ENCODE measurements at regions of chr2 and their contacts with region 1.

Region 1: DNA sequence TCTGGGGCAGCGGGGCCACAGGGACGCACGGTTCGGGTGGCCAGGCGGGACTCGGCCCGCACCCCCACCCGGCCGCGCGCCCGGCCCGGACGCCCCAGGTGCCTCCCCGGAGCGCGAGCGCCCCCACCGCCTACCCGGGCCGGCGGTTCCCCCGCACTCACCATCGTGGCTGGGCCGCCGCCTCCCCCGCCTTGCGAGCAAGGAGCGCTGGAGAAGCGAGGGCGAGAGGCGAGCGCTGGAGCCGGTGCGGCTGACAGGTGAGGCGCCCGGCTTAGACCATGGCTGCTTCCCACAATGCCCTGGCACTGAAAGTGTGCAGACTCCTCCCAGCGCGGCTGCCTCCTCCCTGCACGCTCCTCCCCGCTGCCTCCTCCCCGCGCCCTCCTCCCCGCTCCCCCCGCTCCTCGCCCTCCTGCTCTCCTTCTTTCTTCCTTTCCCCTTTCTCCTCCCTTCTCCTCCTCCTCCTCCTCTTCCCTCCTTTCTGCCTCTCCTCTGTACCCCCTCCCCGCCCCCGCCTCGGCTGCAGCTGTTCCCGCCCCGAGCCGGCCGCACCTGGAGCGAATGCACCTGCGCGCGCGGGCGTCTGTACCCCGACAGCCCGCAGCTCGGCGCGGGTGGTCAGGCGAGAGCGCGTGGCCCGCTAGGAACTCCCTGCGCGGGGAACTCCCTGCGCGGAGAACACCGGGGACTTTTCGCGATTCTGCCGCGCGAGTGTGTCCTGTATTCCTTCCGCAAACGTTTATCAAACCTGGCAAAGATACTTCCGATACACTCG is at the start of gene AP1S3:
- DNase-seq: peak; percentile 69
- ATAC-seq: peak; percentile 94
- H3K4me3 ChIP-seq: peak within 1 kb of the TSS; percentile 78 to 89 (median 79)
- H3K27ac ChIP-seq: no peak within 1 kb of the TSS
- H3K4me1 ChIP-seq: peaks cover 29% of the 10 kb centered on the region
- H3K27me3 ChIP-seq: no peaks in the 10 kb centered on the region; a peak in 1 of 5 replicates
- CTCF ChIP-seq: peak; percentile 71
- EP300 ChIP-seq: no peak
- POLR2A ChIP-seq: peak; percentile 57 to 64; a peak in 3 of 4 replicates
- RAD21 ChIP-seq: peak; percentile 76
- total RNA-seq, gene AP1S3: 16.3 and 26.3 TPM in 2 replicates

Region 2: GRCh38 chr2:223779877-223780276 is 57.6 kb before region 1 on chr2:
- CTCF ChIA-PET with region 1: no interaction called
- POLR2A ChIA-PET with region 1: no interaction called
- in situ Hi-C with region 1: no loop called
- intact Hi-C with region 1: loop called (anchors 2 kb)
- DNase-seq: peak; percentile 68
- ATAC-seq: peak; percentile 88
- H3K4me3 ChIP-seq: no peak overlapping the region
- H3K27ac ChIP-seq: no peak overlapping the region
- H3K4me1 ChIP-seq: no peaks in the 10 kb centered on the region
- H3K27me3 ChIP-seq: no peaks in the 10 kb centered on the region
- CTCF ChIP-seq: peak; percentile 68
- EP300 ChIP-seq: no peak
- POLR2A ChIP-seq: no peak
- RAD21 ChIP-seq: no peak

Region 3: GRCh38 chr2:223811757-223812156 is 25.7 kb before region 1 on chr2:
- CTCF ChIA-PET with region 1: no interaction called
- POLR2A ChIA-PET with region 1: no interaction called
- in situ Hi-C with region 1: no loop called
- intact Hi-C with region 1: no loop called
- DNase-seq: no peak
- ATAC-seq: no peak
- H3K4me3 ChIP-seq: no peak overlapping the region
- H3K27ac ChIP-seq: no peak overlapping the region
- H3K4me1 ChIP-seq: no peaks in the 10 kb centered on the region
- H3K27me3 ChIP-seq: no peaks in the 10 kb centered on the region
- CTCF ChIP-seq: no peak
- EP300 ChIP-seq: no peak
- POLR2A ChIP-seq: no peak
- RAD21 ChIP-seq: no peak

Region 4: DNA sequence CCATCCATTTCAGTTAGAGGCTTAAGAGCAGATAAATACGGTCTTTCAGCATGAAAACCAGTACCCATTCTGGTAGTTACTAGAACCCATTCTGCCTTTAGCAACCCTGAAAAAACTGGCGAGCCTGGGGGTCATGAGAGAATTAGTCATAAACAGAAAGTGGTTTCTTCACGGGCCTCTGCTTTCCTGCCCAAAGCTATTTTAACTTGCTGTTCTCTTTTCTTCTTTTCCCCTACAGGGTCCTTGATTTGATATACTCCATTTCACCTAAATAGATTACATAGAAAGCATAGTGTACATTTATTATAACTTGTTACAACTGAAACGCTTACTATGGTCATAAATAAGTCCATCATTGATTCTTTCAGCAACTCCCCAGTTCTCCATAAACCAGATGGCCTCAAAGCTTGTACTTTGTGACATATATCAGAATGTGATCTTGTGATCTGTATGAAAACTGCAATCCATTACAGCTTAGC is 59.4 kb after region 1 on chr2:
- CTCF ChIA-PET with region 1: no interaction called
- POLR2A ChIA-PET with region 1: no interaction called
- in situ Hi-C with region 1: no loop called
- intact Hi-C with region 1: loop called (anchors 5 kb)
- DNase-seq: no peak
- ATAC-seq: no peak
- H3K4me3 ChIP-seq: no peak overlapping the region
- H3K27ac ChIP-seq: no peak overlapping the region
- H3K4me1 ChIP-seq: peaks cover 15% of the 10 kb centered on the region
- H3K27me3 ChIP-seq: no peaks in the 10 kb centered on the region
- CTCF ChIP-seq: no peak
- EP300 ChIP-seq: no peak
- POLR2A ChIP-seq: no peak
- RAD21 ChIP-seq: no peak

Measured in HepG2 (cell line).